Endothelial cell of umbilical vein (primary cell): ENCODE measurements at regions of chr11 and their contacts with region 1.

Region 1: DNA sequence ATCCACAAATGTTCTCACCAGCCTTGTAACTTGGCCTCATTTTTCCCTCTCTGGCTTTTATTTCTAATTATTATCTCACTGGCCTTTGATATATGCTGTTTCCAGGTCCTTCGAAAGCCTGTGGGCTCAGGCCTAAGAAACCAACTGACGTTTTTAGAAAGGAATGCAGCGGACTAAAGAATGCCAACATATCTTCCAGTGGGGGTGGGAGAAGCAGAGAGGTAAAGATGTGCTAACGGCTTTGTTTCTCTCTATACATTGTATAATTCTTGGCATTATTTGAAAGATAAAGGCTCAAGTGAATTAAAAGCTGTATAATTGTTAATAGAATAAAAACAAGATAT is 28.2 kb downstream of the OR6Q1 start:
- DNase-seq: peak; percentile 88
- H3K4me3 ChIP-seq: no peak overlapping the region
- H3K27ac ChIP-seq: peak overlapping the region; percentile 88
- H3K4me1 ChIP-seq: peaks cover 16% of the 10 kb centered on the region
- H3K27me3 ChIP-seq: no peaks in the 10 kb centered on the region
- CTCF ChIP-seq: no peak
- POLR2A ChIP-seq: no peak

Region 2: GRCh38 chr11:57815877-57816276 is 243.1 kb before region 1 on chr11:
- CTCF ChIA-PET with region 1: interaction called, 19 read pairs
- POLR2A ChIA-PET with region 1: no interaction called
- dilution Hi-C with region 1: no loop called
- intact Hi-C with region 1: no loop called
- DNase-seq: no peak
- H3K4me3 ChIP-seq: no peak overlapping the region
- H3K27ac ChIP-seq: no peak overlapping the region
- H3K4me1 ChIP-seq: no peaks in the 10 kb centered on the region
- H3K27me3 ChIP-seq: no peaks in the 10 kb centered on the region
- CTCF ChIP-seq: no peak
- POLR2A ChIP-seq: no peak

Region 3: DNA sequence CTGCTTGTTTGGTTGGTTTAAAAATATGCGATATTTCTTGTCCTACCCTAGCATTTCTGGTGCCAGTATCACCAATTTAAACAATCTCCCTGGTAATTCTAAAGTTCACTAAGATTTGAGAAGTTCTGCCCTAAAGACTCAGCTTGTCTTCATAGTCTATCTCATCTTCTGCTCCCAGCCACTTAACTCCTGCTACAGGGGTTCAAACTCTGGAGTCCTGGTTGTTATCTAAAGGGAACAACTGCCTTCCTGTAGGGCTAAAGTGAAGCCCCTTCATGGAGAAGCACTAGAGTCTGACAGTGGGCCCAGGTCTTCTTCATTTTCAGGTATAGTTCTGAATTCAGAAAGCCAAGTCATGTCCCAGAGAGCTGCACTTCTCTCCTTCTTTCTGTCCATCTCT is 224.1 kb before region 1 on chr11:
- CTCF ChIA-PET with region 1: interaction called, 10 read pairs
- POLR2A ChIA-PET with region 1: no interaction called
- dilution Hi-C with region 1: no loop called
- intact Hi-C with region 1: loop called (anchors 10 kb)
- DNase-seq: no peak
- H3K4me3 ChIP-seq: no peak overlapping the region
- H3K27ac ChIP-seq: no peak overlapping the region
- H3K4me1 ChIP-seq: no peaks in the 10 kb centered on the region
- H3K27me3 ChIP-seq: peaks cover 6 to 7% of the 10 kb centered on the region in 2 experiments
- CTCF ChIP-seq: no peak
- POLR2A ChIP-seq: no peak

Region 4: DNA sequence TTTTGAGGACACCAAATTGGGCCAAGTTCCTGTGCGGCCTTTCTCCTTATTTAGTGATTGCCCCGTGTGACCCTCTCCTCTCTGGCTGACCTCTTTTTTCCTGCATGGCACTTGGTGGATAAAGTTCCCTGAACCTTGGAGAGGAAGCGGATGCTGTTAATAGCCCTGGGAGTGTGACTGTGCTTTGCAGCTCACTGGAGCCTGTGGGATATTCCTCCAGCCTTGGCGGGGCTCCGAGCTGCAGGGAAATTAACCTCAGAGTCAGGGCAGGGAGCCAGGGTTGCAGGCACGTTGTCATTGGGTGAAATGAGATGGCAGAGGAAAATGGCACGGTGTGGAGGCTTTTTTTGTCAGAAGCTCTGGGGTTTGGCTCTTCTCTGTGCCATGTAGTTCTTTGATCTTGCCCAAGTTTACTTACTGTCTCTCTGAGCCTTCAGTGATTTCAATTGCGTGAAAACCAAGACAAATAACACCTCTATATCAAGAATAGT is 34.3 kb before region 1 on chr11:
- CTCF ChIA-PET with region 1: interaction called, 4 read pairs
- POLR2A ChIA-PET with region 1: no interaction called
- dilution Hi-C with region 1: no loop called
- intact Hi-C with region 1: loop called (anchors 1 kb)
- DNase-seq: peak; percentile 91
- H3K4me3 ChIP-seq: no peak overlapping the region
- H3K27ac ChIP-seq: peak overlapping the region; percentile 32
- H3K4me1 ChIP-seq: peaks cover 13% of the 10 kb centered on the region
- H3K27me3 ChIP-seq: no peaks in the 10 kb centered on the region
- CTCF ChIP-seq: no peak
- POLR2A ChIP-seq: no peak

Region 5: DNA sequence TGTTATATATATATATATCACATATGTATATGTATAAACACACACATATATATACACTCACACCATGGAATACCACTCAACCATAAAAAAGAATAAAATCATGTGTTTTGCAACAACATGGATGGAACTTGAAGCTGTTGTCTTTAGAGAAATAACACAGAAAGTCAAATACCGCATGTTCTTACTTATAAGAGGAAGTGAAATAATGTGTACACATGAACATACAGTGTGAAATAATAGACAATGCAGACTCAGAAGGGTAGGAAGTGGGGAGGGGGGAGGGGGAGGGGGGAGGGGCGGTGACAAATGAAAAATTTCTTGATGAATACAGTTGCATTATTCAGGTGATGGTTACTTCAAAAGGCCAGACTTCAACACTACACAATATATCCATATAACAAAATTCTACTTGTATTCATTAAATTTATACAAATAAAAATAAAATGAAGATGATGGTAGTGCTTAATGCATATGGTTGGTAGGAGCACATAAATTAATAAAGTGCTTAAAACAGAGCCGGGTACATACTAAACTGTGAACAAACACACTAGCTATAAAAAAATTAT is 374.7 kb after region 1 on chr11:
- CTCF ChIA-PET with region 1: no interaction called
- POLR2A ChIA-PET with region 1: no interaction called
- dilution Hi-C with region 1: no loop called
- intact Hi-C with region 1: no loop called
- DNase-seq: no peak
- H3K4me3 ChIP-seq: no peak overlapping the region
- H3K27ac ChIP-seq: no peak overlapping the region
- H3K4me1 ChIP-seq: no peaks in the 10 kb centered on the region
- H3K27me3 ChIP-seq: no peaks in the 10 kb centered on the region
- CTCF ChIP-seq: no peak
- POLR2A ChIP-seq: no peak

Region 6: GRCh38 chr11:58513747-58514367 is 454.9 kb after region 1 on chr11:
- CTCF ChIA-PET with region 1: no interaction called
- POLR2A ChIA-PET with region 1: no interaction called
- dilution Hi-C with region 1: no loop called
- intact Hi-C with region 1: loop called (anchors 10 kb)
- DNase-seq: peak; percentile 73
- H3K4me3 ChIP-seq: no peak overlapping the region
- H3K27ac ChIP-seq: no peak overlapping the region
- H3K4me1 ChIP-seq: no peaks in the 10 kb centered on the region
- H3K27me3 ChIP-seq: peaks cover 18 to 32% of the 10 kb centered on the region in 2 experiments
- CTCF ChIP-seq: peak; percentile 57 to 68
- POLR2A ChIP-seq: no peak